H1 (cell line): ENCODE measurements at regions of chr11 and their contacts with region 1.

Region 1: DNA sequence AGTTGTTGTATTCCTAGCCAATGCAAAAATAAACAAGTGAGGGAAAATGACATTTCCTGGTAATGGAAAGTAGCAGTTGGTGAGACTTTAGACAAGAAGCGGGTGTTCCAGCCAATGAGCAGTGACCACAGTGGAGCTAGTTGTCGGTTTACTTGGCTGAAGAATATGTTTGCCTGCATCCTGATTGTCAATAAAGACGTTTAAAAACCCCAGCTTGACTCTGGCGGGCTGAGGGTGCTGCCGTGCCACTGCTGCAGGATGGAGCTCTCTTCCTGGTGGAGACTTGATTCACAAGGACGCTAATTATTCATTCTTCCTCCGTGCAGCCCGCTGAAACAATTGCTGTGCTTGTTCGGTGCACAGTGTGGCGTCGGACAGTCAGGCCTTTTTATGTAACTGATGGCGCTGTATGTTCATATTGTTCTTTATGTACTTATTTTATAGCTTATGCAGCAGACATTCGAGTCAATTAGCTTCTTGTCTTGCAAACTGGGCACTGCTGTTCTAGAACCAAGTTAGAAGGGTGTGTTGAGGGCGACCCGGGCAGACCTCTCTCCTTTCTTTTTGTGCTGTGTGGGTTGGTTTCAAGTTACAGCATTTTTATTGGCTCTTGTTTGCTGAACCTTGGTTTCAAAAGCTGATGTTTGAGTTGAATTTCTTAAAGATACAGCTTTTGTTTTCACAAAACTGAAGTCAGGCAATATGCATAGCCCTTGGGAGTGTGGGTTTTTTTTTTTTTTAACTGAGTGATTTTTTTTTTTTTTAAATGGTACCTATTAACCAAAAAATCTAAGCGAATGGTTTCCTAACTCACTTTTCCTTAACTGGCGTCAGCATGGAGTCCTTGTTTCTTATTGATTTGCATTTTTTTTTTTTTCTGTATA is 153.9 kb downstream of the TEAD1 start:
- DNase-seq: peak in 1 of 2 experiments; percentile 29
- H3K4me3 ChIP-seq: peak overlapping the region; percentile 44 to 60 (median 50); a peak in 7 of 8 replicates
- H3K27ac ChIP-seq: peak overlapping the region; percentile 73
- H3K4me1 ChIP-seq: peaks cover 24 to 42% (median 32%) of the 10 kb centered on the region in 4 experiments
- H3K27me3 ChIP-seq: no peaks in the 10 kb centered on the region
- CTCF ChIP-seq: no peak
- EP300 ChIP-seq: no peak
- POLR2A ChIP-seq: peak in 1 of 2 experiments; percentile 68; a peak in 2 of 3 replicates
- RAD21 ChIP-seq: no peak

Region 2: GRCh38 chr11:12813371-12814225 is 14.6 kb before region 1 on chr11:
- CTCF ChIA-PET with region 1: interaction called, 19 read pairs
- POLR2A ChIA-PET with region 1: interaction called, 10 read pairs
- DNase-seq: no peak
- H3K4me3 ChIP-seq: no peak overlapping the region
- H3K27ac ChIP-seq: no peak overlapping the region
- H3K4me1 ChIP-seq: peaks cover 3 to 14% (median 7%) of the 10 kb centered on the region in 4 experiments; a peak in 6 of 7 replicates
- H3K27me3 ChIP-seq: no peaks in the 10 kb centered on the region
- CTCF ChIP-seq: no peak
- EP300 ChIP-seq: no peak
- POLR2A ChIP-seq: no peak
- RAD21 ChIP-seq: no peak